Heart right ventricle (tissue), 16 donors: ENCODE measurements at regions of chr9 and their contacts with region 1.

Region 1: GRCh38 chr9:9804109-9804508 is 808.7 kb downstream of the PTPRD start:
- DNase-seq: no peak
- ATAC-seq: no peak
- H3K4me3 ChIP-seq: no peak overlapping the region
- H3K27ac ChIP-seq: no peak overlapping the region
- H3K4me1 ChIP-seq: no peaks in the 10 kb centered on the region
- H3K27me3 ChIP-seq: no peaks in the 10 kb centered on the region
- CTCF ChIP-seq: no peak

Region 2: GRCh38 chr9:9747786-9748185 is 56.3 kb before region 1 on chr9:
- intact Hi-C with region 1: loop called in 1 of 10 experiments (anchors 10 kb)
- DNase-seq: no peak
- ATAC-seq: no peak
- H3K4me3 ChIP-seq: no peak overlapping the region
- H3K27ac ChIP-seq: no peak overlapping the region
- H3K4me1 ChIP-seq: no peaks in the 10 kb centered on the region
- H3K27me3 ChIP-seq: no peaks in the 10 kb centered on the region
- CTCF ChIP-seq: no peak

Region 3: GRCh38 chr9:9912459-9912858 is 108.3 kb after region 1 on chr9:
- intact Hi-C with region 1: no loop called
- DNase-seq: no peak
- ATAC-seq: no peak
- H3K4me3 ChIP-seq: no peak overlapping the region
- H3K27ac ChIP-seq: no peak overlapping the region
- H3K4me1 ChIP-seq: no peaks in the 10 kb centered on the region
- H3K27me3 ChIP-seq: no peaks in the 10 kb centered on the region
- CTCF ChIP-seq: no peak